Spleen (tissue), 13 donors: ENCODE measurements at regions of chr1 and their contacts with region 1.

Region 1: DNA sequence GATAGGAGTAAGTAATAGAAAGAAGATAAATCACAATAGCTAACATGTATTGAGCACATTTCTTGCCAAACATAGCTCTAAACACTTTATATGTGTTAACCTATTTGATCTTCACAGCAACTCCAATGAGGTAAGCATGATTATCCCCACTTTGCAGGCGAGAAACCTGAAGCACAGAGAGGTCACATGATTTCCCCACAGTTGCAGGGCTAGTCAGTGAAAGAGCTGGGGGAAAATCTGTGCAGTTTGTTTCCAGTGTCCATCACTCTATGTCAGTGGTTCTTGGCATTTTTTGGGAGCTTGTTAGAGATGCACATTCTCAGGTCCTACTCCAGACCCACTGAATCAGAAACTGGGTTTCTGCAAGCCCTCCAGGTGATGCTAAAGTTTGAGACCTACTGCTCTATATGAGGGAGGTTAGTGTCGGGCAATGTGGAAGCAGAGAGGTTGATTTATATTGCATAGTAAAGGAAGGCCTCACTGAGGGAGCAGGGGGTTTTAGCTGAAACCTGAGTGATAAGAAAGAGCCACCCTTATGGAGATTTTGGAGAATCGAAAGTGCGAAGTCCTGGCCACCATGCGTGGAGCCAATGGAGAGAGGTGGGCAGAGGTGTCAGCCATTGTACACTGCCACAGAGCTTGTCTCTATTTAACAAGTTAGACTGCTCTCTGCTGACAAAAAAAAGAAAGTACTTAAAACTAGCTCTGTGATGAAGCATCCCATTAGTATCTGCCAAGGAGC is 20.9 kb downstream of the MCOLN3 start:
- DNase-seq: no peak
- H3K4me3 ChIP-seq: peak overlapping the region in 2 of 8 donors; percentile 10 to 53
- H3K27ac ChIP-seq: peak overlapping the region in 4 of 8 donors; percentile 17 to 67 (median 40)
- H3K4me1 ChIP-seq: peaks cover 0 to 12% (median 3%) of the 10 kb centered on the region in 6 donors
- H3K27me3 ChIP-seq: no peaks in the 10 kb centered on the region
- CTCF ChIP-seq: peak in 4 of 11 experiments; percentile 27 to 47 (median 36)
- POLR2A ChIP-seq: no peak

Region 2: DNA sequence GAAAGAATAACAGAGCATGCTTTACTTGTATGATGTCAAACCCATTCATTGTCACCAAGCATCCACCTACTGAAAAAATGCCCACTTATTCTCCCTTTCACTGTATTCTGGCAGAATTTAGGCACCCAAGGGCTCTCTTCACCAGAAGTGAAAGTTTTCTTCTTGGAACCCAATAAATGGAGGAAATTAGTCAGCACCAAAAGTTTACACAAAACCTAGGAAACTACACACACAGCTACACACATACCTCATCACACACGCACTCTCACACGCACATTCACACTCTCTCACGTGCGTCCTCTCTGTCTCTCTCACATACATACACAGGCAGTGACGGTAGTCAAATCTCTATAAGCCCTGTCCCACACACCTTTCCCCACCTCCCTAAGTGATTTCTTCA is 68.1 kb before region 1 on chr1:
- intact Hi-C with region 1: loop called (anchors 10 kb)
- DNase-seq: no peak
- H3K4me3 ChIP-seq: no peak overlapping the region
- H3K27ac ChIP-seq: no peak overlapping the region
- H3K4me1 ChIP-seq: peaks cover 0 to 3% (median 0%) of the 10 kb centered on the region in 6 donors
- H3K27me3 ChIP-seq: no peaks in the 10 kb centered on the region
- CTCF ChIP-seq: no peak
- POLR2A ChIP-seq: no peak